ENCODE measurements at regions of chr6 and their contacts with region 1.

Region 1: GRCh38 chr6:64280569-64280968 is 645.0 kb downstream of the PHF3 start:
- DNase-seq: peak; percentile 21
- ATAC-seq: 0 out of 3 replicates have a peak, but pooled peaks have one; percentile 46
- H3K4me3 ChIP-seq: no peak overlapping the region
- H3K27ac ChIP-seq: no peak overlapping the region
- H3K4me1 ChIP-seq: 0 out of 2 replicates have a peak, but pooled peaks cover 8% of the 10 kb centered on the region
- H3K27me3 ChIP-seq: no peaks in the 10 kb centered on the region
- CTCF ChIP-seq: peak; percentile 64
- EP300 ChIP-seq: no peak
- POLR2A ChIP-seq: no peak
- RAD21 ChIP-seq: peak; percentile 62; the same call in 1 of the 2 replicates

Region 2: DNA sequence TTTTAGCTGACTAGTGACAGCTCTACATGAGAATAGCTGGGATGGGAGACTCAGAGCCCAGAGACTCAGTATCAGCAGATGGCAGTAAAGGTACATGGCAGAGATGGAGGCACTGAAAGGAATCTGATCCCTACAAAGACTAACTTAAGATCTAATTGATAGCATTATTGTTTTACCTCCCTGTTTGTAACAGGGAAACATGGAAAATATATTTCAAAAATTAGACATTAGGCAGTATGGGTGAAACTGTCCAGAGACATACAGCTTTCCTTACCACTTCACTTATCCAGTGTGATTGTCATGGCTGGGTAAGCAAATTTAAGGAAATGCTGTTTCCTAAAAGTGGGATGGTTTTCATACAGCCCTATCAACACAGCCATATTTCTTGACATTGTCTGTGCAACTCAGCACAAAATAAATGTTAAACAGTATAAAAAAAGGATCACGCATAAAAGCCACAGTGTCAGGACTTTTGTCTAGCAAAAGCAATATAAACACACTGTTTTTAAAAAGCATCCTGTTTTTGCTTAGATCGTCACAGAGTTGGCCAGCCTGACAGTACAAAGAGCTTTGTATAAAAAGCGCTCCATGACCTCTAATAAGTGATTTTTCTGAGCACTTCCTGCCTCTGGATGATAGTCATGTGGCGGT is 268.1 kb before region 1 on chr6:
- CTCF ChIA-PET with region 1: no interaction called
- POLR2A ChIA-PET with region 1: no interaction called
- in situ Hi-C with region 1: no loop called
- intact Hi-C with region 1: loop called (anchors 1 kb)
- DNase-seq: peak; percentile 61
- ATAC-seq: peak; percentile 99
- H3K4me3 ChIP-seq: no peak overlapping the region
- H3K27ac ChIP-seq: no peak overlapping the region
- H3K4me1 ChIP-seq: no peaks in the 10 kb centered on the region
- H3K27me3 ChIP-seq: no peaks in the 10 kb centered on the region; a peak in 1 of 5 replicates
- CTCF ChIP-seq: peak; percentile 93
- EP300 ChIP-seq: no peak
- POLR2A ChIP-seq: no peak
- RAD21 ChIP-seq: peak; percentile 93

Region 3: DNA sequence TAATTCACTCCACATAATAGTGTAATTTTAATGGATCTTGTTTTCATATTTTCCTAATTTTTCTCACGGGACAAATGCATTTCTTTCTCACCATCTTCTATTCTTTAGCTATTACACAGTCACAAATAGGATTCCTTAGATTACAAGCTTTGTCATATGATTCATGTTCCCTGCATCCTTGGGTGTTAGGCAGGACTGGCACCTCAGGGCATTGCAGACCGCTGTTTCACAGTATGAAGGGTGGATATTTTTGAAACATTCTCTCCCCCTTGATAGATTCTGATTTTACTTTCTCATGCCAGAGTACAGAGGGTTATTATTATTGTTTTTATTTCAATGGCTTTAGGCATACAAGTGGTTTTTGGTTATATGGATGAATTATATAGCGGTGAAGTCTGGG is 42.5 kb before region 1 on chr6:
- CTCF ChIA-PET with region 1: no interaction called
- POLR2A ChIA-PET with region 1: no interaction called
- in situ Hi-C with region 1: no loop called
- intact Hi-C with region 1: no loop called
- DNase-seq: no peak
- ATAC-seq: no peak
- H3K4me3 ChIP-seq: no peak overlapping the region
- H3K27ac ChIP-seq: no peak overlapping the region
- H3K4me1 ChIP-seq: no peaks in the 10 kb centered on the region
- H3K27me3 ChIP-seq: no peaks in the 10 kb centered on the region
- CTCF ChIP-seq: no peak
- EP300 ChIP-seq: no peak
- POLR2A ChIP-seq: no peak
- RAD21 ChIP-seq: no peak

Region 4: DNA sequence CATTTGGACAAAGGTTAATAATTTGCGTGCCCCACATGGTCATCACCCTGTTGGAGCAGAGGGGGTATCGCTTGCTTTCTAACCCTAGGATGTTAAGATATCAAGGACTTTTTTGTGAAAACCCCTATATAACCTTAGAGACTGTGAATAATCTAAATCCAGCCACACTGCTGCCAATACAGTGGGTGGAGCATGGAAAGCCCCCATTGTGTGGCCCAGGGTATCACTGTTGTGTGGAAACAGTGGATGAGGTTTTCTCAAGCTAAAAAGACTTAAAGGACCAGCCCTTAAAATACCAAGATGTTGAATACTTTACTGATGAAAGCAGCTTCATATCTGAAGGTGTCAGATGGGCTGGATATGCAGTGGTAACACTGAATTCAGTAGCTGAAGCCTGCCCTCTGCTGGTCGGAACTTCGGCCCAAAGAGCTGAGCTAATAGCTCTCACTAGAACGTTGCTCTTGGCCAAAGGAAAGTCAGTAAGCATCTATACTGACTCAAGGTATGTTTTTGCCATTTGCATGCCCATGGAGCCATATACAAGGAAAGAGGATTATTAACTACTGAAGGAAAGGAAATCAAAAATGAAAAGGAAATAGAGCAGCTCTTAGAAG is 50.2 kb after region 1 on chr6:
- CTCF ChIA-PET with region 1: interaction called, 36 read pairs
- POLR2A ChIA-PET with region 1: no interaction called
- in situ Hi-C with region 1: no loop called
- intact Hi-C with region 1: loop called (anchors 1 kb)
- DNase-seq: peak; percentile 55
- ATAC-seq: peak; percentile 87
- H3K4me3 ChIP-seq: no peak overlapping the region
- H3K27ac ChIP-seq: no peak overlapping the region
- H3K4me1 ChIP-seq: no peaks in the 10 kb centered on the region
- H3K27me3 ChIP-seq: no peaks in the 10 kb centered on the region
- CTCF ChIP-seq: peak; percentile 93
- EP300 ChIP-seq: no peak
- POLR2A ChIP-seq: no peak
- RAD21 ChIP-seq: peak; percentile 73

Region 5: GRCh38 chr6:64505312-64505711 is 224.7 kb after region 1 on chr6:
- CTCF ChIA-PET with region 1: no interaction called
- POLR2A ChIA-PET with region 1: no interaction called
- in situ Hi-C with region 1: no loop called
- intact Hi-C with region 1: loop called (anchors 1 kb)
- DNase-seq: peak; percentile 29
- ATAC-seq: peak; percentile 89
- H3K4me3 ChIP-seq: no peak overlapping the region
- H3K27ac ChIP-seq: no peak overlapping the region
- H3K4me1 ChIP-seq: no peaks in the 10 kb centered on the region
- H3K27me3 ChIP-seq: no peaks in the 10 kb centered on the region; a peak in 1 of 5 replicates
- CTCF ChIP-seq: peak; percentile 75
- EP300 ChIP-seq: no peak
- POLR2A ChIP-seq: no peak
- RAD21 ChIP-seq: no peak

Region 6: GRCh38 chr6:64732888-64733287 is 452.3 kb after region 1 on chr6:
- CTCF ChIA-PET with region 1: no interaction called
- POLR2A ChIA-PET with region 1: no interaction called
- in situ Hi-C with region 1: no loop called
- intact Hi-C with region 1: loop called (anchors 5 kb)
- DNase-seq: peak; percentile 9
- ATAC-seq: peak; percentile 77
- H3K4me3 ChIP-seq: no peak overlapping the region
- H3K27ac ChIP-seq: no peak overlapping the region
- H3K4me1 ChIP-seq: no peaks in the 10 kb centered on the region
- H3K27me3 ChIP-seq: no peaks in the 10 kb centered on the region
- CTCF ChIP-seq: peak; percentile 41; the same call in 1 of the 2 replicates
- EP300 ChIP-seq: no peak
- POLR2A ChIP-seq: no peak
- RAD21 ChIP-seq: no peak

Measured in HepG2 (cell line).